ENCODE measurements at regions of chr13 and their contacts with region 1.

Region 1: GRCh38 chr13:21034603-21035191 is 26.7 kb downstream of the LATS2 start:
- DNase-seq: peak; percentile 71
- H3K4me3 ChIP-seq: no peak overlapping the region
- H3K27ac ChIP-seq: peak overlapping the region; percentile 12
- H3K4me1 ChIP-seq: peaks cover 66% of the 10 kb centered on the region
- H3K27me3 ChIP-seq: no peaks in the 10 kb centered on the region
- CTCF ChIP-seq: peak; percentile 23 to 54
- POLR2A ChIP-seq: no peak

Region 2: DNA sequence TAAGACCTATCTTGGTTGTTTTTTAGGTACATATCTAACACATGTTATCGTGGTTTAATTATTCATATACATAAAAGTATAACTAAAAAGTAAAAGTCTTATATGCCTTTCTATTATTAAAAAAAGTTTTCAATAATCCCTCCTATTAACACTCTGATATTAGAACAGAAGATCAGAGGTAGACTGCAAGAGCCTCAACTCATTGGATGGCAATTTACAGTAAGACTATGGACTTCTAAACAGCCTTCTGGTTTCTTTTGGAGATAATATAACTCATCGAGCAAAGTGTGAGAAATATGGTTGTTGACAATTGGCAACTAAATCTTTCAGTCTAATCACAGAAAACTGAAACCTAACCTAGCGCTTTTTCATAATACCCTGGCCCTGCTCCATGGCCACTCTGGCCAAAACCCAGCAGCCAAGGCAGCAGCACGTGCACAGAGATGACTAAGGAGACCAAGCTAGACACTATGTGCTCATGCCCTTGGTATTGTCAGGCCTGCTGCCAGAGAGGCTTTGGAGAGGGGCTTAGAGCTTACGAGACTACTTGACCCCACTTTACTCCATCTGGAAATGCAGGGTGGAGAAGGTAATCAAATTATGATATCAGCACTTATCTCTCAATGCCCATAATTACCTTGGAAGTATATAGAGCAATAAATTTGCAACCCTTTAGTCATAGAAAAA is 220.3 kb before region 1 on chr13:
- CTCF ChIA-PET with region 1: no interaction called
- POLR2A ChIA-PET with region 1: no interaction called
- dilution Hi-C with region 1: no loop called
- intact Hi-C with region 1: no loop called
- DNase-seq: peak; percentile 98
- H3K4me3 ChIP-seq: peak overlapping the region in 1 of 3 experiments; percentile 30
- H3K27ac ChIP-seq: peak overlapping the region; percentile 99
- H3K4me1 ChIP-seq: peaks cover 44% of the 10 kb centered on the region
- H3K27me3 ChIP-seq: no peaks in the 10 kb centered on the region
- CTCF ChIP-seq: no peak
- POLR2A ChIP-seq: no peak

Region 3: GRCh38 chr13:20940083-20940880 is 94.4 kb before region 1 on chr13:
- CTCF ChIA-PET with region 1: interaction called, 11 read pairs
- POLR2A ChIA-PET with region 1: no interaction called
- dilution Hi-C with region 1: no loop called
- intact Hi-C with region 1: no loop called
- DNase-seq: no peak
- H3K4me3 ChIP-seq: no peak overlapping the region
- H3K27ac ChIP-seq: no peak overlapping the region
- H3K4me1 ChIP-seq: no peaks in the 10 kb centered on the region
- H3K27me3 ChIP-seq: no peaks in the 10 kb centered on the region
- CTCF ChIP-seq: no peak
- POLR2A ChIP-seq: no peak

Region 4: GRCh38 chr13:21014502-21015170 is 20.1 kb before region 1 on chr13:
- CTCF ChIA-PET with region 1: interaction called, 18 read pairs
- POLR2A ChIA-PET with region 1: interaction called, 4 read pairs
- dilution Hi-C with region 1: no loop called
- intact Hi-C with region 1: loop called (anchors 1 kb)
- DNase-seq: peak; percentile 58
- H3K4me3 ChIP-seq: no peak overlapping the region
- H3K27ac ChIP-seq: peak overlapping the region; percentile 32
- H3K4me1 ChIP-seq: peaks cover 51% of the 10 kb centered on the region
- H3K27me3 ChIP-seq: no peaks in the 10 kb centered on the region
- CTCF ChIP-seq: no peak
- POLR2A ChIP-seq: no peak

Region 5: DNA sequence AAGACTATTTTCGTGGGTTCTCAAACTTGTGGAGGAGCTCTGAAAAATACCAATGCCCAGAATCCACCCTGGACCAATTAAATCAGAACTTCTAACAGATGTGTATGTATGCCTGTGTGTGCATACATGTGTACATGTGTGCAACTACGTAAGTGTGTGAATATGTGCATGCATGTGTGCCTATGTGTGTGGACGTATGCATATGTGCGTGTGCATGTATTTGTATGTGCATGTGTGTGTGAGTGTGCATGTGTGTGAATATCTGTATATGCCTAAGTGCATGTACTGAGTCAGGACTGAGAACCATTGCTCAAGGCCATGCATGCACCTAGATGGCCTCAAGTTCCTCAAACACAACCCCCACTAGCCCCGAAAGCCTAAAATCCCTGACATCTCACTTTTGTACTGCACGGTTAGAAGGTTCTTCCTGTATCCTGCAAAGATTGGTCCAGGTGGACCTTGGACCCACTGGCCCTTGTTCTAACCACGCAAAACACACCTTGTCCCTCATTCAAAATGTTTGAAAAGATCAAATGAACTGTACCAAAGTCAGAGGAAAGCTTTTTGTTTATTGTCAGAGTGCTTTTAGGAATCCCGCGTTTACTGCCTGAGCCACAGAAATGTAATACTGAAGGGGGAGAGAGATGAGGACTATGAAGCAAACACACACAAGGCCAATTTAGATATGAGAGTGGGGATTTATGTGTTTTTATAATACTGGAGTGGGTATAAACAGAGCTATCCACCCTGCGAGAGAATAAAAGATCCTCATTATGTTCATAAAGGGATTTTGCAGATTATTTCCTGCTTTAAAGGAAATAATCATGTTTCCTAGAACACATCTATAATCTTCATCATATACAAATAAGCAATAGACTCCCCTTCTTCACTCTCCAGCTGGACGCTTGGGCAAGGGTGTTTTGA is 12.4 kb before region 1 on chr13:
- CTCF ChIA-PET with region 1: interaction called, 18 read pairs
- POLR2A ChIA-PET with region 1: interaction called, 4 read pairs
- dilution Hi-C with region 1: no loop called
- intact Hi-C with region 1: loop called (anchors 1 kb)
- DNase-seq: no peak
- H3K4me3 ChIP-seq: no peak overlapping the region
- H3K27ac ChIP-seq: no peak overlapping the region
- H3K4me1 ChIP-seq: peaks cover 16% of the 10 kb centered on the region
- H3K27me3 ChIP-seq: no peaks in the 10 kb centered on the region
- CTCF ChIP-seq: no peak
- POLR2A ChIP-seq: no peak

Region 6: DNA sequence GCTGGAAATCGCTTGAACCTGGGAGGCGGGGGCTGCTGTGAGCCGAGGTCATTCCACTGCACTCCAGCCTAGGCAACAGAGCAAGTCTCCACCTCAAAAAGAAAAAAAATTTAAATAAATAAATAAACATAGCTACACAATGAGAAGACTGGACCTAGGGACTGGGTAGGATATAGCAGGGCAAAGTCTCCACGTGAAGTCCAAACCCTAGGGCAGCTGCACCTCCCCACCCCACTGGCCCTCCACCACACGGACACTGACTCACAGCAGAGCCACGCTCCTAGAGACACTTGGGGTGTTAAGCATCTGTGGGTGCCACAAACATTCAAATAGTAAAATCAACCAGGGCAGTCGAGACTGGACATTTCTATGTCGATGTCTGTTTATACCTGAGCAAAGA is 19.6 kb after region 1 on chr13:
- CTCF ChIA-PET with region 1: interaction called, 22 read pairs
- POLR2A ChIA-PET with region 1: interaction called, 3 read pairs
- dilution Hi-C with region 1: no loop called
- intact Hi-C with region 1: no loop called
- DNase-seq: no peak
- H3K4me3 ChIP-seq: no peak overlapping the region
- H3K27ac ChIP-seq: peak overlapping the region; percentile 12
- H3K4me1 ChIP-seq: peaks cover 65% of the 10 kb centered on the region
- H3K27me3 ChIP-seq: no peaks in the 10 kb centered on the region
- CTCF ChIP-seq: no peak
- POLR2A ChIP-seq: no peak

Region 7: DNA sequence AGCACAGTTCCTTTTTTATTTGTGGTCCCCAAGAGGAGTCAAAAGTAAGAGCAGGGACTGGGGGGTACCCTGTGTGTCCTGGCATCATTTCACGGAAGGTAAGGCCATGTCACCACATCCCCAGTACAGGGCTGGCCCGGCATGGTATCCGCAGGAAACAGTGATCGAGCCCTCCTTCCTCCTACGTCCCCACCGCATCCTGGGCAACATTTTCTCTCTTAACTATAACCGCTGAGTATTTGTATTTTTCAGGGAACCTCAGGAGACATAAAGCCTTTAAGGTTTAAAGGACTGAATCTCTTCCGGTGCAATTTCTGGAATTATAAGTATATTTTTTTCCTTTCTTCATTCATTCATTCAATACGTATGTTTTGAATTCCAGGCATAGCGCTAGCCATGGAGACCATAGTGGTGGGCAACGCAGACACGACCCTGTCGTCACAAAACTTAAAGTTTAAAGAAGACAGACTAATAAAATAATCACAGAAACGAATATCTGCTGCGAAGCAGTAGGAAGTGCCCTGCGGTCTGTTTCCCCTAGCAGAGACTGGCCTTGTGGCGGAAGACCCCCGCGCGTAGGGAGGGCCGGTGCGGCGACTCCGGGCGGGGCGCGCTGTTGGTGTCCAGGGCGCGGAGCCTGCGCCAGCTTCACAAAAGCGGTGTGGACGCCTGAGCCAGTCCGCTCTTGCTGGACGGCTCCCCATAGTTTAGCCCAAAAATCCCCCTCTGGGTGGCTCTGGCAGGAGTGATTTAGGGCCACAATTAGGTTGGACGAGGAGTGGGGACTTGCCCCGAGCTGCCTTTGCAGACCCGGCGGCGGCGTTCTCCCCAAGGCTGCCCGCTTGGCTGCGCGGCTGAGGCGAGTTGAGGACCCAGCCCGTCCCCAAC is 40.6 kb after region 1 on chr13:
- CTCF ChIA-PET with region 1: interaction called, 5 read pairs
- POLR2A ChIA-PET with region 1: interaction called, 5 read pairs
- dilution Hi-C with region 1: no loop called
- intact Hi-C with region 1: loop called (anchors 1 kb)
- DNase-seq: peak; percentile 59
- H3K4me3 ChIP-seq: peak overlapping the region in 2 of 3 experiments; percentile 51 to 52
- H3K27ac ChIP-seq: peak overlapping the region; percentile 95
- H3K4me1 ChIP-seq: peaks cover 31% of the 10 kb centered on the region
- H3K27me3 ChIP-seq: no peaks in the 10 kb centered on the region
- CTCF ChIP-seq: no peak
- POLR2A ChIP-seq: peak; percentile 76

Region 8: GRCh38 chr13:21106089-21106488 is 71.4 kb after region 1 on chr13:
- CTCF ChIA-PET with region 1: no interaction called
- POLR2A ChIA-PET with region 1: no interaction called
- dilution Hi-C with region 1: no loop called
- intact Hi-C with region 1: no loop called
- DNase-seq: no peak
- H3K4me3 ChIP-seq: no peak overlapping the region
- H3K27ac ChIP-seq: no peak overlapping the region
- H3K4me1 ChIP-seq: no peaks in the 10 kb centered on the region
- H3K27me3 ChIP-seq: no peaks in the 10 kb centered on the region
- CTCF ChIP-seq: no peak
- POLR2A ChIP-seq: no peak

Measured in endothelial cell of umbilical vein (primary cell).